Activated T-helper 2 cell treated with anti-CD3 and anti-CD28 coated beads, Interferon-gamma antibody, Interleukin-2, Interleukin-4, amounts not matched to agents 10 μg/mL and 5 μg/mL and 100 μg/mL, durations not matched to agents 14 hours and 24 hours and 36 hours (primary cell): ENCODE measurements at regions of chr11 and their contacts with region 1.

Region 1: GRCh38 chr11:86291466-86292262 is 10.4 kb upstream of the HIKESHI start:
- DNase-seq: peak; percentile 33
- H3K4me3 Mint-ChIP-seq: no peak overlapping the region
- H3K27ac Mint-ChIP-seq: peak overlapping the region; percentile 74
- H3K4me1 Mint-ChIP-seq: peaks cover 52% of the 10 kb centered on the region
- H3K27me3 Mint-ChIP-seq: no peaks in the 10 kb centered on the region

Region 2: DNA sequence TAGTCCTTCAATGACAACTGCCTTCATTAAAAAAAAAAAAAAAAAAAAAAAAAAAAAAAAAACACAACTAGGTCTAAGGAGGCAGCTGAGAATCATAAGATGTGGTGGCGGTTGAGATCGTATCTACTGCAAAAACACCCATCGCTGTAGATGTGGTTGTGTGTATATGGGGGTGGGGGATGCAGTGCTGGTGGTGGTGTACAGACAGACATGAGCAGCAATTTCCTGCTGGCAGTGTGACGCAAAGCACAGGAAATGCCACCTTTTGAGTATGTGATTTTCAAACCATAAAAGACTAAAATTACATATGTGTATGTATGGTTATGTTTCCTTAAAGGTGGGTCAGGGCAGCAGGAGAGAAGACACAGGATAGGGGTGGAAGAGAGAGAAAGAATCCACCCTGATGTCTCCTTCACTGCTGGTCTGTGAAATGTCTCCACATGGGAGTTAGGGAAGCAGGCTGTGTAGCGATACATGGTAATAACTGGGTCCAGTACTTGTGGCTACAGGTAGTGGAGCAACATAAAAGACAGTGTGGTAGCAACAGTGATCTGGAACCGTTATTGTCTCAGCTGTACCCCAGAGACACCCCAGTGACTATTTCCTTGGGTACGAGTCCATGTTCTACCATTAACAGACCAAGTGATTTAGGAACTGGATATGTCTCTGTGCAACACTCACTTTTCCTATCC is 538.6 kb before region 1 on chr11:
- intact Hi-C with region 1: loop called (anchors 2 kb)
- DNase-seq: peak; percentile 91
- H3K4me3 Mint-ChIP-seq: peak overlapping the region; percentile 57
- H3K27ac Mint-ChIP-seq: peak overlapping the region; percentile 95
- H3K4me1 Mint-ChIP-seq: peaks cover 89% of the 10 kb centered on the region
- H3K27me3 Mint-ChIP-seq: no peaks in the 10 kb centered on the region

Region 3: GRCh38 chr11:86047275-86047991 is 244.2 kb before region 1 on chr11:
- intact Hi-C with region 1: loop called (anchors 1 kb)
- DNase-seq: no peak
- H3K4me3 Mint-ChIP-seq: peak overlapping the region; percentile 65
- H3K27ac Mint-ChIP-seq: peak overlapping the region; percentile 96
- H3K4me1 Mint-ChIP-seq: peaks cover 73% of the 10 kb centered on the region
- H3K27me3 Mint-ChIP-seq: no peaks in the 10 kb centered on the region

Region 4: GRCh38 chr11:86174101-86175046 is 117.3 kb before region 1 on chr11:
- intact Hi-C with region 1: loop called (anchors 1 kb)
- DNase-seq: no peak
- H3K4me3 Mint-ChIP-seq: no peak overlapping the region
- H3K27ac Mint-ChIP-seq: no peak overlapping the region
- H3K4me1 Mint-ChIP-seq: peaks cover 15% of the 10 kb centered on the region
- H3K27me3 Mint-ChIP-seq: no peaks in the 10 kb centered on the region

Region 5: DNA sequence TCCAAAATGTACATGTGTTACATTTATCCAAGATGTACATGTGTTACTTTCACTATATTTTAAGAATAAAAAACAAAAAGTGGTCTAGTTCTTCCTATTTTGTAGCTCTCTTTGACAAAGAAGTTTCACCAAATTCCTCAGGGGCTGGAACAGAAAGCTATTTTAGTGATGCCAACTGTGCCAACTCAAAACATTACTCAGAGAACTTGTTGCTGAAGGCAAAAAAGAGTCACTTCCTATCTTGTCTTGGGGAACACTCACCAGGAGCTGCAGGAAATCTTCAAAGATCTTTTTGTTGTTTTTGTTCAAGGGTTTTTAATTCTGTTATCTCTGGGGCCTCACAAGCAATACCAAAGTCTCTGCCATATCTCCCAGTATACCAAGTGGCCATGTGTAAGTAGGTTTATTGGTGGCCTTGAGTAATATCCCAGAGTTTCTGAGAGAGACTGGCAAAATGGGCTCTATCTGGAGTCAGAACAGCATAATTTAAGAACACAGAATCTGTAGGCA is 60.7 kb before region 1 on chr11:
- intact Hi-C with region 1: loop called (anchors 1 kb)
- DNase-seq: no peak
- H3K4me3 Mint-ChIP-seq: no peak overlapping the region
- H3K27ac Mint-ChIP-seq: peak overlapping the region; percentile 38
- H3K4me1 Mint-ChIP-seq: peaks cover 54% of the 10 kb centered on the region
- H3K27me3 Mint-ChIP-seq: peaks cover 3% of the 10 kb centered on the region

Region 6: DNA sequence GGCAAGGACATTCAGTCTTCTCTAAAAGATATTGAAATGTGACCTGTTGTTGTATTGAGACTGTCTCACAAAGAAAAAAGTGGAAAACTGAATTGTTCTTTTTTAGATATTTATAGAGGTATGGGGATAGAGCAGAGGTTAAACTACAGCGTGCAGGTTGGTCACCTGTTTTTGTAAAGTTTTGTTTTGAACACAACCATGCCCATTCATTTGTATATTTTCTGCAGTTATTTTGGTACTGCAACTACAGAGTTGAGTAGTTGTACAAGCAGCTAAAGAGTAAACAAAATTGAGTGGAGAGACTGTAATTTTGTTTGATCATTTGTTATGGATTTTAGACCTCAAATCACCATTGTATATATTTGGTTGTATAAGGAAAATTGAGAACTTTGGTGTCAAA is 35.8 kb before region 1 on chr11:
- intact Hi-C with region 1: no loop called
- DNase-seq: no peak
- H3K4me3 Mint-ChIP-seq: no peak overlapping the region
- H3K27ac Mint-ChIP-seq: peak overlapping the region; percentile 22
- H3K4me1 Mint-ChIP-seq: peaks cover 24% of the 10 kb centered on the region
- H3K27me3 Mint-ChIP-seq: no peaks in the 10 kb centered on the region

Region 7: DNA sequence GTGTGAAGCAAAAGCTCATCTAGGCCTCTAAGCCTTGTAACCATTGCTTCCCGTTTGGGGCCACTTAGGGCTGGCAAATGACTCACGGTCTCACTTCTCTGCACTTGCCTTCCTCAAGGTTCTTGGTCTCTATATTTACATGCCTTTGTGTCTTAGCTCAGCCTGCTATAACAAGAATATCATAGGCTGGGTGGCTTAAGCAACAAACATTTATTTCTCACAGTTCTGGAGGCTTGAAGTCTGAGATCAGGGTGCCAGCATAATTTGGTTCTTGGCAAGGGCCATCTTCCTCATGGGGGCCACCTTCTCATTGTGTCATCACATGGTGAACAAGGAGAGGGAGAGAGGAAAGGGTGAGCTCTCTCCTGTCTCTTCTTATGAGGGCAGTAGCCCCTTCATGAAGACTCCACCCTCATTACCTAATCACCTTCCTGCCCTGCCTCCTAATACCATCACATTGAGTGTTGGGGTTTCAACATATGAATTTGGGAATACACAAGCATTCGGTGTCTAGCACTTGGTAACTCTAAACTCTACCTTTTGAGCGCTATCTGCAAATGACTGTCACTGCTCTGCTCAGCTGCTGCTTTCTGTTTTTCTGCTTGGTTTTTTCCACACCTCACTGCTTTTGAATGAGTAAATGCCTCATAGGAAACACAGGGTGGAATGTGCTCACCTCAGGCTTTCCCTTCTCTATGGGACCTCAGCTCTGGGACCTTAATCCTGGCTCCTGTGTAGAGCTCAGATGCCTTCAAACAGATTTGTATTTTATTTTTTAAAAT is 396.9 kb after region 1 on chr11:
- intact Hi-C with region 1: loop called (anchors 5 kb)
- DNase-seq: no peak
- H3K4me3 Mint-ChIP-seq: peak overlapping the region; percentile 61
- H3K27ac Mint-ChIP-seq: peak overlapping the region; percentile 92
- H3K4me1 Mint-ChIP-seq: peaks cover 24% of the 10 kb centered on the region
- H3K27me3 Mint-ChIP-seq: peaks cover 6% of the 10 kb centered on the region